ENCODE measurements at regions of chr9 and their contacts with region 1.

Region 1: GRCh38 chr9:83649080-83649479 is 26.1 kb downstream of the IDNK start:
- DNase-seq: peak; percentile 84
- ATAC-seq: peak; percentile 91
- H3K4me3 Mint-ChIP-seq: no peak overlapping the region
- H3K27ac Mint-ChIP-seq: no peak overlapping the region
- H3K4me1 Mint-ChIP-seq: peaks cover 14% of the 10 kb centered on the region
- H3K27me3 Mint-ChIP-seq: no peaks in the 10 kb centered on the region
- CTCF ChIP-seq: peak; percentile 88

Region 2: GRCh38 chr9:83544002-83544698 is 104.9 kb before region 1 on chr9:
- CTCF ChIA-PET with region 1: interaction called, 12 read pairs
- POLR2A ChIA-PET with region 1: no interaction called
- DNase-seq: no peak
- ATAC-seq: peak; percentile 96
- H3K4me3 Mint-ChIP-seq: no peak overlapping the region
- H3K27ac Mint-ChIP-seq: no peak overlapping the region
- H3K4me1 Mint-ChIP-seq: 0 out of 2 replicates have a peak, but pooled peaks cover under 1% of the 10 kb centered on the region
- H3K27me3 Mint-ChIP-seq: peaks cover 25% of the 10 kb centered on the region
- CTCF ChIP-seq: peak; percentile 70

Region 3: GRCh38 chr9:83583151-83584014 is 65.7 kb before region 1 on chr9:
- CTCF ChIA-PET with region 1: no interaction called
- POLR2A ChIA-PET with region 1: no interaction called
- DNase-seq: peak; percentile 76
- ATAC-seq: peak; percentile 97
- H3K4me3 Mint-ChIP-seq: no peak overlapping the region
- H3K27ac Mint-ChIP-seq: no peak overlapping the region
- H3K4me1 Mint-ChIP-seq: peaks cover 13% of the 10 kb centered on the region
- H3K27me3 Mint-ChIP-seq: no peaks in the 10 kb centered on the region
- CTCF ChIP-seq: peak; percentile 52

Region 4: DNA sequence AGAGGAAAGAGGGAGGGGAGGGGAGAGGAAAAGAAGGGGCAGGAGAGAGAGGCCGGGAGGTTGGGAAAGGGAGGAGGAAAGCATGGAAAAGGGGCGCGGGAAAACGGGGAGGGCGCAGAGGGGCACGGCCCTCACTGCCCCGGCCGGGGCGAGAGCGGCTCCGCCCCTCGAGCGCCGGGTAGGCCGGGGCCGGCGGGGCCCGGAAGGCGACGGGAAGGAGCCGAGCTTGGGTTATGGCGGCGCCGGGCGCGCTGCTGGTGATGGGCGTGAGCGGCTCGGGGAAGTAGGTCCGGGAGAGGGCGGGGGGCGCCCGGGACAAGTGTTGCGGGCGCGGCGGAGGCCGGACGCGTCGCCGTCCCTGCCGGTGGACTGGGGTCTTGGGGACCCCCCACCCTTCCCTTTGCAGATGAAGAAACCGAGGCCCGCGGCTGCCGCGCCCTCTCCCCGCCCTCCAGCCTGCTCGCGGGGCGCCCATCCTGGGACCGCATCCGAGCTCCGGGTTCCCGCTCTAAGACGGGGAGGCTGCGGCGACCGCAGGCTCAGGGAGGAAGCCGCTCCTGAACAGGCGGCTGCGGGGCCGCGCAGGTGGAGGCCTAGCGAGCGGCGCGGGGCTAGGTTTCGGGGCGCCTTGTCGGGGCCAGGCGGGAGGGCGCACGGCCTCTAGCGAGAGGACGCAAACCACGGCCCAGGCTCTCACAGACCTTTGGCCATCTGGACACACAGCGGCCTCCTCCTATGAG is 26.0 kb before region 1 on chr9 and contains the start of gene IDNK:
- CTCF ChIA-PET with region 1: interaction called, 71 read pairs
- POLR2A ChIA-PET with region 1: no interaction called
- DNase-seq: peak; percentile 69
- ATAC-seq: peak; percentile 83
- H3K4me3 Mint-ChIP-seq: peak within 1 kb of the TSS; percentile 80
- H3K27ac Mint-ChIP-seq: no peak within 1 kb of the TSS
- H3K4me1 Mint-ChIP-seq: peaks cover 17% of the 10 kb centered on the region
- H3K27me3 Mint-ChIP-seq: peaks cover 8% of the 10 kb centered on the region
- CTCF ChIP-seq: no peak
- total RNA-seq, gene IDNK: 0.50 to 0.78 TPM (median 0.69 TPM) in 3 replicates

Region 5: DNA sequence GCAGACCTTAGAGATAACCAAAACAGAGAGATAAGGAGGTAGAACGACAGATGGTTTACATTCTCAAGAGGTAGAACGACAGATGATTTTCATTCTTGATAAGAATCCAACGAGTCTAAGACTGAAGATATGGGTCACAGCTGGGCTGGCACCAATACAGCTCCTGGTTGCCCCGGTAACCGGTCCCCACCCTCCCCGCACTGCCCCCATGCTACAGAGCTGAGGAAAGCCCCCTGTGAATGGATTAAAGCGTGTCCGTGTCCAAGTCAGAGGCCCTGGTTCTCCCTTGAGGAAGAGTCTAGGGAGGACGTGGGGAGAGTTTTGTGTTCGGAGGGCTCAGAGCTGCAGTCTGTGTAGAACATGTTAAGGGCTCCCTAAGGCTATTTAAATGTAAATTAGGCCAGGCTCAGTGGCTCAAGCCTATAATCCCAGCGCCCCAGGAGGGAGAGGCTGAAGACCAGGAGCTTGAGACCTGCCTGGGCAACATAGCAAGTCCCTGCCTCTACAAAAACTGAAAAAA is 18.1 kb before region 1 on chr9:
- CTCF ChIA-PET with region 1: interaction called, 13 read pairs
- POLR2A ChIA-PET with region 1: interaction called, 3 read pairs
- DNase-seq: peak; percentile 69
- ATAC-seq: peak; percentile 98
- H3K4me3 Mint-ChIP-seq: peak overlapping the region; percentile 43
- H3K27ac Mint-ChIP-seq: no peak overlapping the region
- H3K4me1 Mint-ChIP-seq: peaks cover 38% of the 10 kb centered on the region
- H3K27me3 Mint-ChIP-seq: no peaks in the 10 kb centered on the region
- CTCF ChIP-seq: no peak

Region 6: DNA sequence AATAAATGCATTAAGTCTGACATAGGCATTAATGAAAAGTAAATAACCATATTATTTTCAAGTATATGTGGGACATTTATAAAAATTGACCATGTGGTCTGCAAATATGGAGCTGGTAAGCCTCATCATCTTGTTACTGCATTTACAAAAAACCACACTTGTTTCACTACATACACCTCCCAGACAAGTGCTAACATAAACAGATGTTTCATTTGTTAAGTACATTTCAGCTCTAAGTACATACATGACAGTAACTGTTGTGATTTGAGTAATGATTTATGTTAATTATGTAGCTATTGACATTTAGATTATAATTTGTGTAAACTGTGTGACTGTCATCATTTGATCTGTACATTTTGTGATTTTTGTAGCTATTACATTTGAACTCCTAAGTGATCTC is 12.3 kb before region 1 on chr9:
- CTCF ChIA-PET with region 1: interaction called, 13 read pairs
- POLR2A ChIA-PET with region 1: no interaction called
- DNase-seq: no peak
- ATAC-seq: no peak
- H3K4me3 Mint-ChIP-seq: no peak overlapping the region
- H3K27ac Mint-ChIP-seq: no peak overlapping the region
- H3K4me1 Mint-ChIP-seq: peaks cover 18% of the 10 kb centered on the region
- H3K27me3 Mint-ChIP-seq: no peaks in the 10 kb centered on the region
- CTCF ChIP-seq: no peak